K562 (cell line): ENCODE measurements at regions of chr5 and their contacts with region 1.

Region 1: DNA sequence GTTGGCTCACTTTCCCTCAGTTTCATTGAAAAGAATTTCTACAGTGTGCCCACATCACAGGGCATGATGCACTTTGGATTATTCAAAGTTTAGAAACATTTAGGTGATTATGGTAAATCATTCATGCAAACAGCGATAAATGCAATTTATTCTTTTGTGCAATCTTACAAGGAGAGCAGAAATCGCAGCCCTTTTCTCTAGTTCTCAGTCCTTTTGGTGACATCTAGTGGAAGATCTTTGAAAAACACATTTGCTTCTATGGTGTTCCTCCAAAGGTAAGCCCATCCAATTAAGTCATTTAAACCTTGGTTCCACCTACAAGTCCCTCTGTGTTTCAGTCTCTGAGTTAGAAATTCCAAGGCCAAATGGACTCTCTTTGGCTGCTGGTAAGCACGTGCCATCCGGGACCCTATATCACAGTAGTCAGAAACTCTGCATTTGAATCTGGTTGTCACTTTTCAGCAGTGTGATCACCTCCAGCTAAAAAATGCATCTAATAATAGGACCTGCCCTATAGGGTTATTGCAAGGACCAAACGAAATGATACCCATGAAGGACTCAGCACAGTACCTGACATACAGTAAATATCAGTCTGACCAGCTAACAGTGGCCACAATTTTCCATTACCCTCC is 66.4 kb downstream of the MACROH2A1 start:
- DNase-seq: peak; percentile 67 to 75 (median 71)
- ATAC-seq: peak; percentile 74
- H3K4me3 ChIP-seq: no peak overlapping the region
- H3K27ac ChIP-seq: no peak overlapping the region
- H3K4me1 ChIP-seq: no peaks in the 10 kb centered on the region; a peak in 1 of 5 replicates
- H3K27me3 ChIP-seq: no peaks in the 10 kb centered on the region
- CTCF ChIP-seq: peak; percentile 49 to 81 (median 66); a peak in 5 of 6 replicates
- EP300 ChIP-seq: no peak
- POLR2A ChIP-seq: no peak
- RAD21 ChIP-seq: peak; percentile 79 to 90

Region 2: GRCh38 chr5:135208903-135209721 is 123.5 kb before region 1 on chr5:
- CTCF ChIA-PET with region 1: no interaction called
- POLR2A ChIA-PET with region 1: no interaction called
- in situ Hi-C with region 1: no loop called
- intact Hi-C with region 1: no loop called
- DNase-seq: peak in 1 of 4 experiments; percentile 16
- ATAC-seq: no peak
- H3K4me3 ChIP-seq: no peak overlapping the region
- H3K27ac ChIP-seq: no peak overlapping the region
- H3K4me1 ChIP-seq: peaks cover 4 to 21% of the 10 kb centered on the region in 2 experiments; a peak in 4 of 5 replicates
- H3K27me3 ChIP-seq: peaks cover 0 to 10% of the 10 kb centered on the region in 2 experiments; a peak in 2 of 5 replicates
- CTCF ChIP-seq: no peak
- EP300 ChIP-seq: no peak
- POLR2A ChIP-seq: no peak
- RAD21 ChIP-seq: no peak

Region 3: GRCh38 chr5:135255461-135256178 is 77.0 kb before region 1 on chr5:
- CTCF ChIA-PET with region 1: no interaction called
- POLR2A ChIA-PET with region 1: interaction called, 3 read pairs
- in situ Hi-C with region 1: loop called (anchors 5 kb)
- intact Hi-C with region 1: loop called (anchors 1 kb)
- DNase-seq: peak in 1 of 4 experiments; percentile 52
- ATAC-seq: peak; percentile 90
- H3K4me3 ChIP-seq: no peak overlapping the region
- H3K27ac ChIP-seq: no peak overlapping the region; the same call in 2 of the 3 replicates
- H3K4me1 ChIP-seq: peaks cover 5 to 14% of the 10 kb centered on the region in 2 experiments; a peak in 4 of 5 replicates
- H3K27me3 ChIP-seq: no peaks in the 10 kb centered on the region
- CTCF ChIP-seq: peak; percentile 15 to 41 (median 39); a peak in 3 of 6 replicates
- EP300 ChIP-seq: no peak
- POLR2A ChIP-seq: no peak
- RAD21 ChIP-seq: peak; percentile 11 to 60; a peak in 2 of 4 replicates

Region 4: GRCh38 chr5:135448791-135449507 is 116.3 kb after region 1 on chr5:
- CTCF ChIA-PET with region 1: no interaction called
- POLR2A ChIA-PET with region 1: no interaction called
- in situ Hi-C with region 1: no loop called
- intact Hi-C with region 1: no loop called
- DNase-seq: no peak
- ATAC-seq: no peak
- H3K4me3 ChIP-seq: no peak overlapping the region
- H3K27ac ChIP-seq: no peak overlapping the region
- H3K4me1 ChIP-seq: peaks cover 0 to 12% of the 10 kb centered on the region in 2 experiments; a peak in 2 of 5 replicates
- H3K27me3 ChIP-seq: no peaks in the 10 kb centered on the region; a peak in 3 of 5 replicates
- CTCF ChIP-seq: no peak
- EP300 ChIP-seq: no peak
- POLR2A ChIP-seq: no peak
- RAD21 ChIP-seq: no peak

Region 5: GRCh38 chr5:135565725-135566421 is 233.2 kb after region 1 on chr5:
- CTCF ChIA-PET with region 1: no interaction called
- POLR2A ChIA-PET with region 1: no interaction called
- in situ Hi-C with region 1: no loop called
- intact Hi-C with region 1: no loop called
- DNase-seq: peak; percentile 78 to 82 (median 80)
- ATAC-seq: peak; percentile 92
- H3K4me3 ChIP-seq: no peak overlapping the region
- H3K27ac ChIP-seq: no peak overlapping the region
- H3K4me1 ChIP-seq: peaks cover 7 to 10% of the 10 kb centered on the region in 2 experiments
- H3K27me3 ChIP-seq: peaks cover 0 to 4% of the 10 kb centered on the region in 2 experiments; a peak in 2 of 5 replicates
- CTCF ChIP-seq: peak; percentile 91 to 95 (median 92)
- EP300 ChIP-seq: no peak
- POLR2A ChIP-seq: no peak
- RAD21 ChIP-seq: peak; percentile 53 to 66